B cell (primary cell): ENCODE measurements at regions of chr13 and their contacts with region 1.

Region 1: DNA sequence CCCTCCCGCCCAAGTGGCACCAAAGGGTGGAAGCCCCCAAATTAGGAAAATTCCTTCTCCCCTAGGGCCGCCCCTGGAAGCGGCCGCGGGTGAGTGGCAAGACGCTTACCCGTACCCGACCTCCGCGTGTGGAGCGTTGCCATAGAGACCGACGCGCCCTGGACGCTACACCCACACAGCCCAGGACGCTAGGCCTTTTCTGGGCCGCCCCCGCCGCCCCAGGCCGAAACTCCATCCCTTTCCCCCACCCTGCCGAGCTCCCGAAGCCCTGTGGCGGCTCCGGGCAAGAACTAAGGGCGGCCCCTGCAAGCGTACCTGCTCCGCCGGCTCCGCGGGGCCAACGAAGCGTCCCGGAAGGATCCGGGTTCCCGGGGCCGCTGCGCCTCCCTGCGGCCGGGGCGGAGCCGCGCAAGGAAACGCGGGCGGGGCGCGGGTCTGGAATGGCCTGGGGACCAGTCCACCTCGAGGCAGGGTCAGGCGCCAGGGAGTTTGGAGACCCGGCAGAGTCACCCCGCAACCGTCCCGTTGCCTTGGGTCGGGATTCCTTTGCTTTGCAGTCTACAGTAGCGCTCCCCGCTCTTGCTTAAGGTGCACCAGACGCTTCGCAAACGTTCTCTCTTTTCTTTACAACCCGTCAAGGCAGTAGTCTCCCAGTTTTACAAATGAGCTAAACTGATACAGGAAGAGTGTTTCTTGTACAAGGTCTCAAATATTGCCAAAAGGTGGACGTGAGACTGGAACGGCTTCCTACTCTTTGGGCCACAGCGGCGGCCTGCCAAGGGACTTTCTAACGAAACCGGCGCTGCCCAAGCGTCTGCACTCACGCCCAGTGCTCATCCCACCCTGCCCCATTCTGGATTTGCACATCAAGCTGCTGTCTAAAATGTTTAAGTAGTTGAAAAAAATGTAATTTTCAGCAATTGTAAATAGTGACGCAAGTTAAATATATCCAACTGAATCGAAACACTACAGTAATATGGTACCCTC is at the start of gene NEK5:
- DNase-seq: peak; percentile 64
- ATAC-seq: peak; percentile 66
- H3K4me3 ChIP-seq: peak within 1 kb of the TSS; percentile 50 to 67 (median 61)
- H3K4me3 Mint-ChIP-seq: peak within 1 kb of the TSS; percentile 86
- H3K27ac ChIP-seq: no peak within 1 kb of the TSS
- H3K27ac Mint-ChIP-seq: no peak within 1 kb of the TSS
- H3K4me1 ChIP-seq: peaks cover 17 to 18% of the 10 kb centered on the region in 2 donors
- H3K4me1 Mint-ChIP-seq: peaks cover 16% of the 10 kb centered on the region
- H3K27me3 ChIP-seq: peaks cover 0 to 25% (median 16%) of the 10 kb centered on the region in 4 experiments
- H3K27me3 Mint-ChIP-seq: peaks cover 21% of the 10 kb centered on the region
- CTCF ChIP-seq: peak; percentile 67
- total RNA-seq, gene NEK5: not detected in 2 replicates

Region 2: GRCh38 chr13:51125498-51126226 is 1003.3 kb before region 1 on chr13:
- CTCF ChIA-PET with region 1: interaction called, 20 read pairs
- POLR2A ChIA-PET with region 1: no interaction called
- intact Hi-C with region 1: no loop called
- DNase-seq: peak; percentile 71
- ATAC-seq: peak; percentile 80
- H3K4me3 ChIP-seq: no peak overlapping the region
- H3K4me3 Mint-ChIP-seq: no peak overlapping the region
- H3K27ac ChIP-seq: no peak overlapping the region
- H3K27ac Mint-ChIP-seq: no peak overlapping the region
- H3K4me1 ChIP-seq: peaks cover 0 to 8% of the 10 kb centered on the region in 2 donors
- H3K4me1 Mint-ChIP-seq: peaks cover 4% of the 10 kb centered on the region
- H3K27me3 ChIP-seq: peaks cover 0 to 6% (median 2%) of the 10 kb centered on the region in 4 experiments
- H3K27me3 Mint-ChIP-seq: peaks cover 25% of the 10 kb centered on the region
- CTCF ChIP-seq: peak; percentile 77

Region 3: GRCh38 chr13:51435002-51435578 is 693.9 kb before region 1 on chr13:
- CTCF ChIA-PET with region 1: interaction called, 5 read pairs
- POLR2A ChIA-PET with region 1: no interaction called
- intact Hi-C with region 1: loop called (anchors 10 kb)
- DNase-seq: peak; percentile 50
- ATAC-seq: no peak
- H3K4me3 ChIP-seq: no peak overlapping the region
- H3K4me3 Mint-ChIP-seq: no peak overlapping the region
- H3K27ac ChIP-seq: no peak overlapping the region
- H3K27ac Mint-ChIP-seq: no peak overlapping the region
- H3K4me1 ChIP-seq: no peaks in the 10 kb centered on the region
- H3K4me1 Mint-ChIP-seq: peaks cover 7% of the 10 kb centered on the region
- H3K27me3 ChIP-seq: no peaks in the 10 kb centered on the region
- H3K27me3 Mint-ChIP-seq: no peaks in the 10 kb centered on the region
- CTCF ChIP-seq: peak; percentile 86

Region 4: DNA sequence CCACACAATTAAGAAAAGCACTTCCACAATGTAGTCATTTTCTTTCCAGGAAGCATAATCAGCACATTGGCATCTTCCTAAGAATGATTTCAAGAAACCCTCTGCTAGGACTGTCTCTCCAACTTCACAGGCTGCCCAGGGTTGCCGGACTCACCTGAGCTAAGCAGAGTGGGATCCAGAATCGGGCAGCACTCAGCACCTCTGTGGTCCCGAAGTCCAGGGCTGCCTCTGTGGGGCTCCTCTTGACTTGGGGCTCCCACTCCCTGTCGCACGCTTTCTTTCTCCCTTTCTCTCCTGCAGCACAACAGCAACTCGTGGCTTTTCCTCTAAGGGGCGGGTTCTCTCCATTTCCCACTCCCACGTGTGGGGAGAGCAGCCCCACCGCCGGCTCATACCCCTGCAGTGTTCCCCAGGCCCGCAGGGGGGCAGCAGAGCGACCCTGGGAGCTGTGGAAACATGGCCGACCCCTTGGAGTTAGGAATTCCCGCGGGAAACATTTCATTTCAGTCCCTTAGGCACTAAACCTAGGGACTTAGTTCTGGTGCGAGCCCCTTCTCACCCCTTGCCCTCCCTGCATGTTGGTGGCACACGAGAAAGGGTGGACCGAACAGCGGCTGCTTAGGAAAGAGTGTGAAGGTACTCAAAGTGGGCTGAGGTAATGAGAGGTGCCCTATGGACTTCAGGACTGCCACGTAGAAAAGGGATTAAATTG is 284.0 kb before region 1 on chr13 and contains the start of gene TMEM272:
- CTCF ChIA-PET with region 1: interaction called, 6 read pairs
- POLR2A ChIA-PET with region 1: no interaction called
- intact Hi-C with region 1: loop called (anchors 1 kb)
- DNase-seq: peak; percentile 56
- ATAC-seq: peak; percentile 71
- H3K4me3 ChIP-seq: no peak within 1 kb of the TSS
- H3K4me3 Mint-ChIP-seq: no peak within 1 kb of the TSS
- H3K27ac ChIP-seq: no peak within 1 kb of the TSS
- H3K27ac Mint-ChIP-seq: no peak within 1 kb of the TSS
- H3K4me1 ChIP-seq: peaks cover 0 to 6% of the 10 kb centered on the region in 2 donors
- H3K4me1 Mint-ChIP-seq: peaks cover 5% of the 10 kb centered on the region
- H3K27me3 ChIP-seq: peaks cover 0 to 8% (median 0%) of the 10 kb centered on the region in 4 experiments
- H3K27me3 Mint-ChIP-seq: peaks cover 16% of the 10 kb centered on the region
- CTCF ChIP-seq: peak; percentile 82
- total RNA-seq, gene TMEM272: not detected in 2 replicates

Region 5: GRCh38 chr13:51895906-51896888 is 232.8 kb before region 1 on chr13:
- CTCF ChIA-PET with region 1: interaction called, 15 read pairs
- POLR2A ChIA-PET with region 1: no interaction called
- intact Hi-C with region 1: loop called (anchors 1 kb)
- DNase-seq: peak; percentile 42
- ATAC-seq: peak; percentile 43
- H3K4me3 ChIP-seq: no peak overlapping the region
- H3K4me3 Mint-ChIP-seq: no peak overlapping the region
- H3K27ac ChIP-seq: no peak overlapping the region
- H3K27ac Mint-ChIP-seq: no peak overlapping the region
- H3K4me1 ChIP-seq: no peaks in the 10 kb centered on the region
- H3K4me1 Mint-ChIP-seq: no peaks in the 10 kb centered on the region
- H3K27me3 ChIP-seq: peaks cover 0 to 8% (median 0%) of the 10 kb centered on the region in 4 experiments
- H3K27me3 Mint-ChIP-seq: peaks cover 25% of the 10 kb centered on the region
- CTCF ChIP-seq: peak; percentile 42

Region 6: GRCh38 chr13:52001120-52001731 is 127.8 kb before region 1 on chr13:
- CTCF ChIA-PET with region 1: interaction called, 8 read pairs
- POLR2A ChIA-PET with region 1: no interaction called
- intact Hi-C with region 1: loop called (anchors 1 kb)
- DNase-seq: peak; percentile 55
- ATAC-seq: peak; percentile 85
- H3K4me3 ChIP-seq: no peak overlapping the region
- H3K4me3 Mint-ChIP-seq: no peak overlapping the region
- H3K27ac ChIP-seq: no peak overlapping the region
- H3K27ac Mint-ChIP-seq: no peak overlapping the region
- H3K4me1 ChIP-seq: no peaks in the 10 kb centered on the region
- H3K4me1 Mint-ChIP-seq: no peaks in the 10 kb centered on the region
- H3K27me3 ChIP-seq: peaks cover 0 to 16% (median 2%) of the 10 kb centered on the region in 4 experiments
- H3K27me3 Mint-ChIP-seq: peaks cover 34% of the 10 kb centered on the region
- CTCF ChIP-seq: peak; percentile 90

Region 7: GRCh38 chr13:52091473-52091872 is 37.5 kb before region 1 on chr13:
- CTCF ChIA-PET with region 1: no interaction called
- POLR2A ChIA-PET with region 1: no interaction called
- intact Hi-C with region 1: no loop called
- DNase-seq: no peak
- ATAC-seq: no peak
- H3K4me3 ChIP-seq: no peak overlapping the region
- H3K4me3 Mint-ChIP-seq: no peak overlapping the region
- H3K27ac ChIP-seq: no peak overlapping the region
- H3K27ac Mint-ChIP-seq: no peak overlapping the region
- H3K4me1 ChIP-seq: no peaks in the 10 kb centered on the region
- H3K4me1 Mint-ChIP-seq: no peaks in the 10 kb centered on the region
- H3K27me3 ChIP-seq: no peaks in the 10 kb centered on the region
- H3K27me3 Mint-ChIP-seq: peaks cover 12% of the 10 kb centered on the region
- CTCF ChIP-seq: no peak

Region 8: DNA sequence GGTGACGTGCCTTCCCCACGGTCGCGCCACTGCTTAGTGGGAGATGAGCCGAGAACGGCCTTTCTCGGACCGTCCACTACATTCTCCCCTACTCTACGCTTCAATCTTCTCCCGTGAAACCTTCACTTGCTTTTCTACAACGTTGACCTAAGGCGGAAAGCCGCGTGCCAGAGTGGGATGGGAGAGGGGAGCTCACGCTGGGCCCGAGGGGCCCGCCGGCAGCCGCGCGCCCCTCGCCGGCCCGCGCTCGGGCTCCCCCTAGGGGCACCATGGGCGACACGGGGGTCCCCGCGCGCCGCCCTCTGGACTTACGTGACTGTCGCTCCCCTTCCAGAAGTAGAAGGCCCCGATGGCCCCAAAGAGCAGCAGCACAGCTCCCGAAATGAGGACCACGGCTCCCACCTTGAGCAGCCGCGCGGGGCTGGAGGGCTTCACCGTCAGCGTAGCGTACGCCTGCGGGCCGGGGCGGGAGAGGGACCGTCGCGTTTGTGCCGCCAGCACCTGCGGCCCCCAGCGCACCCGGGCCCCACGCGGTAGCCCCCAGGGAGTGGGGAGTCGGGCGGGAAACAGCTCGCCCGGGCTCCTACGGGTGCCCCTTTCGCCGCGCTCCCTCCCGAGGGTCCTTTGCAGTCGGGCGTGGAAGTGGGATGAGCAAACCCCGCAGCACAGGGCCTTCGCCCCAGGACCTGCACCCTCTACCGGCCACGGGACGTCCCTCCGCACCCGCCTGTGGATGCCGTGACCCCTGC is 609.9 kb after region 1 on chr13:
- CTCF ChIA-PET with region 1: no interaction called
- POLR2A ChIA-PET with region 1: no interaction called
- intact Hi-C with region 1: no loop called
- DNase-seq: peak; percentile 35
- ATAC-seq: peak; percentile 41
- H3K4me3 ChIP-seq: peak overlapping the region in 3 of 5 experiments; percentile 35 to 36 (median 35)
- H3K4me3 Mint-ChIP-seq: peak overlapping the region; percentile 63
- H3K27ac ChIP-seq: no peak overlapping the region
- H3K27ac Mint-ChIP-seq: no peak overlapping the region
- H3K4me1 ChIP-seq: peaks cover 9 to 14% of the 10 kb centered on the region in 2 donors
- H3K4me1 Mint-ChIP-seq: peaks cover 9% of the 10 kb centered on the region
- H3K27me3 ChIP-seq: peaks cover 0 to 27% (median 23%) of the 10 kb centered on the region in 4 experiments
- H3K27me3 Mint-ChIP-seq: peaks cover 60% of the 10 kb centered on the region
- CTCF ChIP-seq: peak; percentile 50